Activated CD8-positive, alpha-beta memory T cell treated with anti-CD3 and anti-CD28 coated beads, Interleukin-2, amount 10 ng/mL, durations not matched to agents 7 days and 5 days (primary cell): ENCODE measurements at regions of chr2 and their contacts with region 1.

Region 1: DNA sequence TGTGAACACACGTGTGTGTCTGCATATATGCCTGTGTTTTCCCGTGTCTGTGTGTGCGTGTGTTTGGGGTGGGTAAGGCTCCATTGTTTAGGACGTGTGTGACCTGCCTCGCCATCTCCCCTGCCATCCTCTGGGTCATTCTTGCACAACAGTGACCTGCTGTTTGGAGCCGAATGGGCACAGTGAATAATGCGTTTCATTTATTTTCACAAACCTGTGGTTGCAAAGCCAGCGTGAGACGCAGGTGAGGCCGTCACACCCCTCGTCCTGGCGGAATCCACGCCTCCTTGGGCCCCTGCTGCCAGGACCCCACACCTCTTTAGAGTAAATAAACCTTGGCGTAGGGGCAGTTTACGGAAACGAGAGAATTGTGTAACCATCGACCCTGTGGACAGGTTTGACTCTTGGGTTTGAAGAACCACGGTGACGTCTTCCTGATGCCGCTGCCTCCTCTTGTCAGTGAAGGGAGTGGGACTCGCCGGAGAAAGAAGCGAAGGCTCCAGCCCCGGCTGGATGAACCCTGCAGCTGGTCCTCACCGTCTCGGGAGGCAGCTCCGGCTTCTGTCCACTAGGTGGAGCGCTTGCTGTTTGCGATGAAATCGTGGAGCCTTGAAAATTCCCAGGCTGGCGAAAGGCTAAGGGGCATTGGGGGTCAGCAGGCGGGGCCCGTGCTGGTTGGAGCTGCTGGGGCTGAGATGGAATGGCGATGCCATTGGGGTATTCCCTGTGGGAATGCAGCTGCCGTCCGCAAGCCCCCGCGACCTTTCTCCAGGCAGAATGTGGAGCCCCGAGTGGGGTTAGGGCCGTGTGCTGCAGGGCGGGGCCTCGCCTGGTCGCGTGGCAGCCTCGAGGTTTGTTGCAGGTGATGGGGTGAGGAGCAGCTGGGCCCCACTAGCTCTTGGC is 81.1 kb downstream of the RTP5 start:
- DNase-seq: peak; percentile 73
- ATAC-seq: no peak
- H3K4me3 Mint-ChIP-seq: no peak overlapping the region
- H3K27ac Mint-ChIP-seq: no peak overlapping the region
- H3K4me1 Mint-ChIP-seq: no peaks in the 10 kb centered on the region
- H3K27me3 Mint-ChIP-seq: no peaks in the 10 kb centered on the region

Region 2: DNA sequence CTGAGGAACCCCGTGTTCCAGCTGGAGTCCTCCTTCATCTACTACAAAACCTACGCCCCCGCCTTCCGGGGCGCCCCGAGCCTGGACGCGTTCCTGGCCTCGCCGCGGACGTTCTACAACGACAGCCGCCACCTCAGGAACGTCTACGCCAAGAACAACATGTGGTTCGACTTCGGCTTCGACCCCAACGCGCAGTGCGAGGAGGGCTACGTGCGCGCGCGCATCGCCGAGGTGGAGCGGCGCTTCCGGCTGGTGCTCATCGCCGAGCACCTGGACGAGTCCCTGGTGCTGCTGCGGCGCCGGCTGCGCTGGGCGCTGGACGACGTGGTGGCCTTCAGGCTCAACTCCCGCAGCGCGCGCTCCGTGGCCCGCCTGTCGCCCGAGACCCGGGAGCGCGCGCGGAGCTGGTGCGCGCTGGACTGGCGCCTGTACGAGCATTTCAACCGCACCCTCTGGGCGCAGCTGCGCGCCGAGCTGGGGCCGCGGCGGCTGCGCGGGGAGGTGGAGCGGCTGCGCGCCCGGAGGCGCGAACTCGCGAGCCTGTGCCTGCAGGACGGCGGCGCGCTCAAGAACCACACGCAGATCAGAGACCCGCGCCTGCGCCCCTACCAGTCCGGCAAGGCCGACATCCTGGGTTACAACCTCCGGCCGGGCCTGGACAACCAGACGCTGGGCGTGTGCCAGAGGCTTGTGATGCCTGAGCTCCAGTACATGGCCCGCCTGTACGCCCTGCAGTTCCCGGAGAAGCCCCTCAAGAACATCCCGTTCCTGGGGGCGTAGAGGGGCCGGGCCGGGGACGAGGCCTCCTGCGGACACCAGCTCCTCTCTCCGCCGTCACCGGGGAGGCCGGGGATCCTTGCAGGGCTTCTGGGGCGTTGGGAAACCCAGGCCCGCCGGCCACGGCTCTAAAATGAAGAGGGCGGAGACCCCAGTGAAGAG is 147.0 kb before region 1 on chr2:
- CTCF ChIA-PET with region 1: no interaction called
- DNase-seq: peak; percentile 65
- ATAC-seq: peak; percentile 75
- H3K4me3 Mint-ChIP-seq: peak overlapping the region; percentile 56
- H3K27ac Mint-ChIP-seq: peak overlapping the region; percentile 57
- H3K4me1 Mint-ChIP-seq: peaks cover 9% of the 10 kb centered on the region
- H3K27me3 Mint-ChIP-seq: peaks cover 8% of the 10 kb centered on the region

Region 3: GRCh38 chr2:241965931-241966412 is 15.3 kb after region 1 on chr2:
- CTCF ChIA-PET with region 1: interaction called, 24 read pairs
- DNase-seq: peak; percentile 90
- ATAC-seq: peak; percentile 93
- H3K4me3 Mint-ChIP-seq: peak overlapping the region; percentile 66
- H3K27ac Mint-ChIP-seq: peak overlapping the region; percentile 75
- H3K4me1 Mint-ChIP-seq: peaks cover 18% of the 10 kb centered on the region
- H3K27me3 Mint-ChIP-seq: peaks cover 9% of the 10 kb centered on the region

Region 4: DNA sequence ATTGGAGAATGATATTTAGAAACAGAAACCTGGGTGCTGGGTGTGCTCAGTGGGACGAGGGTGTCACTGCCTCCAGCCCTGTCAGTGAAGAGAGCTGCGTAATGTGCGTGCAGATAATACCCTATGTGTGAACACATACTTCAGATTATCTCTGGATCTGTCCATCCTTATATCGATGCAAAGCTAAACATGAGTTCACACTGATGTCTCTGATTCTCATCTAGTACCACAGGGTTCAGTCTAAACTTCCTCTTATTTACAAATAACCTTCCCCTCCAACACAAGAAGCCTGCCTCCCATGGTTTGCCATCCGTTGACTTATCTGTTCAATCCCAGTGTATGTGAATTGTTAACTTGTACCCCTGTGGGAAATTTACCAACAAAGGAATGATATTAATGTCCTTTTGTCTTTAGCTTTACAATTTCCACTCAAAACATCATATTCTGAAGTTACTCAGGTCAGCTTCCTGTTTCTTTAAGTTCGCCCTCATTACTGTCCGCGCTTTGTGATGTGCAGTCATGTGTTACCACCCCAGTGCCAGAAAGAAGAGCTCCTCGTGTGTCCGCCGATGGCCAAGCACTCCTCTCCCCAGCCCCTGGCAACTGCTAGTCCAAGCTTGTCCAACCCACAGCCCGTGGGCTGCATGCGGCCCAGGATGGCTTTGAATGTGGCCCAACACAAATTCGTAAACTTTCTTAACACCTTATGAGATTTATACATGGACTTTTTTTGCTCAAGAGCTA is 27.1 kb after region 1 on chr2:
- CTCF ChIA-PET with region 1: interaction called, 19 read pairs
- DNase-seq: peak; percentile 18
- ATAC-seq: no peak
- H3K4me3 Mint-ChIP-seq: no peak overlapping the region
- H3K27ac Mint-ChIP-seq: no peak overlapping the region
- H3K4me1 Mint-ChIP-seq: no peaks in the 10 kb centered on the region
- H3K27me3 Mint-ChIP-seq: no peaks in the 10 kb centered on the region